ENCODE measurements at regions of chr1 and their contacts with region 1.

Region 1: GRCh38 chr1:205255941-205256780 is 28.4 kb downstream of the TMCC2 start:
- DNase-seq: peak; percentile 26
- H3K4me3 ChIP-seq: no peak overlapping the region
- CTCF ChIP-seq: peak; percentile 90

Region 2: GRCh38 chr1:204980840-204981405 is 275.2 kb before region 1 on chr1:
- CTCF ChIA-PET with region 1: interaction called, 269 read pairs
- POLR2A ChIA-PET with region 1: no interaction called
- DNase-seq: no peak
- H3K4me3 ChIP-seq: no peak overlapping the region
- CTCF ChIP-seq: no peak

Region 3: DNA sequence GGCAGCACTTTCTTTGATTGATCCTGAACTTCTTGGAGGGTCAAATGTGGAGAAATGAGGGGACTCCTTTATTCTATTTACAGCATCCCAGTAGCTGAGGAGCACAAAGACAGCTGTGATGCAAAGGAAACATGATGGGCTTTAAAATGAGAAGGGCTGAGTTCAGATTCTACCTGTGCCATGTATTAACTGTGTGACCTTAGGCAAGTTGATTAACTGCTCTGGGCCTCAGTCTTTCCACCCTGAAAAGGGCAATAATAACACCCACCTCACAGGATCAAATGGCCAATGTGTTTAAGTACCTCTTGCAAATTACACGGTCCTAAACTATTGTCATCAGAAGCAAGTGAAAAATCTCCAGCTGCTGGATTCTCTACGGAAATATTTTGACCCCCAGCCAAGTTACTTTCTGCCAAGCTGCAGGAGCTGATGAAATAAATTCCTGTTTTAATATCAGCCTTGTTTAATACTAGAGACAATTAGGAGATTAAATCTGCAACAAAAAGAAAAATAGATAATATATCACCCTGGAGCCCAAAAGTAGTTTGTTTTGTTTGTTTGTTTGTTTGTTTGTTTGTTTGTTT is 187.6 kb before region 1 on chr1:
- CTCF ChIA-PET with region 1: interaction called, 127 read pairs
- POLR2A ChIA-PET with region 1: no interaction called
- DNase-seq: no peak
- H3K4me3 ChIP-seq: no peak overlapping the region
- CTCF ChIP-seq: no peak

Region 4: GRCh38 chr1:205111354-205111753 is 144.8 kb before region 1 on chr1:
- CTCF ChIA-PET with region 1: interaction called, 14 read pairs
- POLR2A ChIA-PET with region 1: no interaction called
- DNase-seq: no peak
- H3K4me3 ChIP-seq: no peak overlapping the region
- CTCF ChIP-seq: no peak

Region 5: GRCh38 chr1:205227584-205228006 is 28.6 kb before region 1 on chr1 and contains the start of gene TMCC2:
- CTCF ChIA-PET with region 1: interaction called, 37 read pairs
- POLR2A ChIA-PET with region 1: interaction called, 4 read pairs
- DNase-seq: no peak
- H3K4me3 ChIP-seq: peak within 1 kb of the TSS; percentile 73
- CTCF ChIP-seq: no peak

Measured in AG04449 (cell line).